Activated CD4-positive, alpha-beta T cell treated with anti-CD3 and anti-CD28 coated beads for 36 hours (primary cell): ENCODE measurements at regions of chr15 and their contacts with region 1.

Region 1: GRCh38 chr15:60787837-60788691 is 309.1 kb upstream of the ICE2 start:
- DNase-seq: peak; percentile 70
- ATAC-seq: peak; percentile 81
- H3K4me3 Mint-ChIP-seq: peak overlapping the region; percentile 5
- H3K27ac Mint-ChIP-seq: peak overlapping the region; percentile 52
- H3K4me1 Mint-ChIP-seq: peaks cover 59% of the 10 kb centered on the region
- H3K27me3 Mint-ChIP-seq: no peaks in the 10 kb centered on the region

Region 2: DNA sequence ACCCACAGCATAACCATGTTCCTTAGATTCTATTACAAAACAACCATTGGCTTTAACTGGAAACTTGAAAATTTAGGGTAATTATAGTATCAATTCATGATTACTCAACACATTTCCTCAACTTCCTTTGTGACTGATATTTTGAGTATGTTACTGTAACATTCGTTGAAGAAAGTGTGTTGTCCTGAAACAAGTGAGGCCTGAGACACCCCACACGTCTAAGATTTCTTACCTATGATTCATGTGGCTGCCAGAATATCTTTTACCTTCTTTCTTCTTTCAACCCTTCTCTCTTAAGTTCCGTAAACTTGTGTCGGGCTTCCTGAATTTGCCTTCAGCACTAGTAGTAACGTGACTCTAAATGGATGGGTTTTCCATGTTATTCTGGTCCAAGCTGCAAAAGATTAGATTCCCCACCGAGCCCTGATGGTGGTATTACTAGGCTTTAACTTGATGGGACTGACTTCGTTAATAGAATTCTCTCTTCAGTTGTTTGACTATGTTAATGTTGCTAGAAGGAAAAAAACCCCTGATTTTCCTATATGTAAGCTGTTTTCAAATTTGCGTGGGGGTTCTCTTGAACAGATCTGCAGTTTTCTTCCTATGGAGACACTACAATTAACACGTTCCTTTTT is 13.1 kb before region 1 on chr15:
- CTCF ChIA-PET with region 1: interaction called, 12 read pairs
- POLR2A ChIA-PET with region 1: interaction called, 3 read pairs
- intact Hi-C with region 1: no loop called
- DNase-seq: peak; percentile 46
- ATAC-seq: peak; percentile 86
- H3K4me3 Mint-ChIP-seq: no peak overlapping the region
- H3K27ac Mint-ChIP-seq: peak overlapping the region; percentile 53
- H3K4me1 Mint-ChIP-seq: peaks cover 69% of the 10 kb centered on the region
- H3K27me3 Mint-ChIP-seq: no peaks in the 10 kb centered on the region